Cardiac septum (tissue), 1 donor: ENCODE measurements at regions of chr18 and their contacts with region 1.

Region 1: DNA sequence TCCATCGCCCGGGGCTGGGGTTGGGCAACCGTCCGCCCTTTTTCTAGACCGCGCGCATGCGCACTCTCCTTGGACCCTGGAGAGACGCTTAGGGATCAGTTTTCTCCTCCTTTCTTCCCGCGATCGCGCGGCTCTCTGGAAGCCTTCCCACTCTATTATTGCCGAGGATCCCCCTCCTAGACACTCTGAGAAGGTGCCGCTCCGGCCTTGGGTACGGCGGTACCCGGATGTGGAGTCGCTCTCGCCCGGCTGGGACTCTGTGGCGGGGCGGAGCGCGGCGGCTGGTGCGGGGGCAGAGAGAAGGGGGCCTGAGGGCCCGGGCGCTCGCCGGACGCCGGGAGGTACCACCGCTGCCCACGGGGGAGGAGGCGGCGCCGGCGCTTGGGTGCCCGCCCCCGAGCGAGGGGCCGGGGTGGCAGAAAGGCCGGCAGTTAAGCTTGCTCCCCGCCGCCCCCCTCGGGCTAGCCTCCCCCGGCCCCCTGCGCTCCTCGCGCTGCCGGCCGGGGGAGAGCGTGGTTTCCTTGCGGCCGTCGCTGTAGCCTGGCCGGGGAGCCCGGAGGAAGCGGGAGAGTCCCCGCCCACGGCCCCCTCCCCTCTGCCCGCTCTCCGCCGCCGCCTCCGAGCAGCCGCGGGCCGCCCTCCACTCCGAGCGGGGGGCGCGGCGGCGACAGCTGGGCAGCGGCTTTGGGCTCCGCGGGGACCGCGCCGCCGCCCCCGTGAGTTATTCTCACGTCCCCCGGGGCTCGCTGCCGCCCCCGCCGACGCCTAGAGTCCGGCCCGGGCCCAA is at the start of gene MIB1:
- DNase-seq: peak; percentile 83
- total RNA-seq, gene MIB1: 29.0 TPM

Region 2: DNA sequence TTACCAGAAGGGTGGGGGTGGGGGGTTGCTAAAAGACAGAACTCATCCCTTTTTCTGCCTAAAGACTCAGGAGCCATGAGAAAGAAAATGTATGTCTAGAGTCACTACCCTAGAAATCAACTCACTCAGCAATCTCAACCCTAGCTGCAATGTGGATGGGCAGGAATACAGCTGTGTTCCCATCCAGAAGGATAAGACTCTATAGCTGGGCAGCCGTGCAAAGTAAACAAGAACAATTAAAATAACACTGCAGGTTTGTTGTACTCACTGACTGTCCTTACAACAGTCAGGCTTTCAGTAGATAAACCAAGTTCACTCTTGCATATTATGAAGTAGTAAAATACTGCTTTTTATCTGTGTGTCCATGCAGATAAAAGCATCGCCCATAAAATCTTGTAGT is 214.5 kb before region 1 on chr18:
- intact Hi-C with region 1: no loop called
- DNase-seq: no peak

Region 3: DNA sequence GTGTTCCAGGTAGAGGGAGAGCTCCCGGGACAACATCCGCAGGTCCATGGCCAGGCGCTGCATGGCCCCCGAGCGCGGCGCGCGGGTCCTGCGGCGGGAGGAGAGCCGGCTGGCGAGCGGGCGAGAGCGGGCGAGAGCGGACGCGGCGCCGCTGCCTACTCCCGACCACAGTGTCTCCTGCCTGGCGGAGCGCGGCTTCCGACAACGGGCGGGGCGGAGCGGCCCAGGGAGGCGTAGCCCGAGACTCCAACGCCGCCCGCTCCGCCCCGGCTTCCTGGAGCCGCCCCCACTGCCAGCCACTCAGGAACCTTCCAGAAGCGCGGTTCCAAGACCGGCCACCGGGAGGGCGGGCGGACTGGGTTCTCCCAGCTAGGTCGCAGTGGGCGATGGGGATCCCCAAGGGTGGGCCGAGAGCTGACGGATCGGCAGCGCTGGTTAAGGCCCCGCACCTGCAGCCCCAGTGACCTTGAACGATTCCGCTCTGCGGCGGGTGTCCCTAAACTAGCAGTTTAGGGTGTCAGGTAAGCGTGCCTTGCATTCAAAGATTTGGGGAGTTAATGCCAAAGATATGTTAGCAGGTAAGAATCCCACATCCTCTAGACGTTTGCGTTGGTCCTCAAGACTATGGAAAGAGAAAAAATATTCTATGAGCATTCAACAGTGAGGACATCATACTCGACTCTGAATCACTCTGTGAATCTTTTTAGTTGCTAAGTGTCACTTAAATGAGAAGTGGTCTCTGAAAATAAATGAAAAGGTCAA is 36.1 kb before region 1 on chr18 and contains the start of gene ABHD3:
- intact Hi-C with region 1: loop called (anchors 2 kb)
- DNase-seq: peak; percentile 98
- total RNA-seq, gene ABHD3: 4.0 TPM

Region 4: DNA sequence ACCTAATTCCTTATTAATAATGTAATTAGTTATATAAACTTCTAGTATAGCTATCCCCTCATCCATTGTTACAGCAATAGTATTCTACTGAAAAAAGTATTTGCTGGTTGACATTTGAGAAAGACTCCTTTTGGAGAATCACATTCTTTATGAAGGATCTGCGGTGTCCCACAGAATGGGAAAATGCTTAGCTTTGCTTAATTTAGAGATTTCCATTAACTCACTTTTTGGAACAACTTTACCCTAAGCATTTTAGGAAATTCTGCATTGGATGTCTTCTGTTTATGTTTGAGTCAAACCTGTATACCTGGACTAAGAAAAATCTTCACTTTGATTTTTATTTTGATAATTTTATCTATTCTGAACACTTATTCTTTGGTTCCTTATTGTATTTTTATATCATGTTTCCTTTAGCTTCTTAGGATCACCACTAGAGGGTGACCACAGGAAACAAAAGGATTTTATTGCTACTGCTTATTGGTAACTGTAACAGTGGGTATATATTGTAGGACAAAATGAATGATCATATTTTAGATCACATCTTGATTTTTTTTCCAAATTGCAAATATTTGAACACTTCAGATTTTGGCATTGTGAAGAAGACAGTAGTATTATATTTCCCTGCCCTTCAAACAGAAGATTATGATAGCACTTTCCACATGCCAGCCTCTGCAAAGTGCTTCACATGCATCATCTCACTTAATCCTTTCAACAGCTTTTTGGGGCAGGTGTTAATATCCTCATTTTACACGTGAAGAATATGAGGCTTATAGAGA is 79.3 kb after region 1 on chr18:
- intact Hi-C with region 1: loop called (anchors 10 kb)
- DNase-seq: no peak